ENCODE measurements at regions of chr7 and their contacts with region 1.

Region 1: GRCh38 chr7:122867471-122867980 is 18.7 kb downstream of the CADPS2 start:
- DNase-seq: no peak

Region 2: GRCh38 chr7:122605924-122606323 is 261.6 kb before region 1 on chr7:
- intact Hi-C with region 1: no loop called
- DNase-seq: no peak

Region 3: GRCh38 chr7:122831436-122831835 is 36.1 kb before region 1 on chr7:
- intact Hi-C with region 1: loop called in 1 of 2 experiments (anchors 1 kb)
- DNase-seq: no peak

Region 4: GRCh38 chr7:122919643-122920181 is 52.2 kb after region 1 on chr7:
- intact Hi-C with region 1: no loop called
- DNase-seq: no peak

Measured in posterior vena cava (tissue), 2 donors.